Dorsolateral prefrontal cortex (tissue), 120 donors: ENCODE measurements at regions of chr2 and their contacts with region 1.

Region 1: DNA sequence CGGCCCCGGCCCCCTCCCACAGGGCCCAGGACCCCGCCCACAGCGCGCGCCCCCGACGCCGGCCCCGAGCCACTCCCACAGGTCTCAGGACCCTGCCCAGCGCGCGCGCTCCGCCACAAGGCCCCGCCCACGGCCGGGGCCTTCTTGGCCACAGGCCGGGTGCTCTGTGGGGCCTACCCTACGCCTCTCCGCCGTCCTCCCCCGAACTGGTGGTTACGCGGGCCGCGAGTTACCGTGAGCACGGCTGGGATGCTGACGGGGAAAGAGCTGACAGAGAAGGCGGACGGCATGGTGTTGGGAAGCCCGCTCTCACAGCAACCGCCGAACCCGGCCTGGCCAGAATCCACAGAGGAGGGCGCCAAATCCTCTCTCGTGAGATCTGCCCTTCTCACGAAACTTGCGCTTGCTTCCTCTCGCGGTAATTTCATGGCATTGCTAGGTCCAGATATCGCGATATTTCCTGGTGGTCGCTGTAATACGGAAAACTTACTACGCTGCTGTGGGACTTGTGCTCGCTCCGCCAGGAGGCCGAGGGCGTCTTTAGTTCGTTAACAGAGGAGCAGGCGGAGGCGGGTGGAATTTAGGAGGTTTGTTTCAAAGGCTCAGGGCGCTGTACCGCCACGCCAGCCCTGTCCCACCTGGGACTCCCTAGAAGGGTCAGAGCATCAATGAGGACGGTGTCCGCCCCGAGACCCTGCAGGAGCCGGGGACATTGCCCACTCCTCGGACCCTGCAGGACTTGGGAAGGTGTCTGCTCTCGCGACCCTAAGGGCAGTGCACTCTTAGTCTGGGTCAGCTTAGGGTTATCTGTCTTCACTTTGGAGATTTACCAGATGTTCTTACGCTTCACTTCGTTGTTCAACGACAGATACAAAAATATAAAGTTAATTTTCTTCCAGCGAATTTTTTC is at the start of gene TMEM18:
- DNase-seq: peak; percentile 73 to 96 (median 90)
- H3K4me3 ChIP-seq: peak within 1 kb of the TSS; percentile 69 to 99 (median 91)
- H3K27ac ChIP-seq: peak within 1 kb of the TSS; percentile 87 to 100 (median 98)
- H3K27me3 ChIP-seq: no peaks in the 10 kb centered on the region
- CTCF ChIP-seq: peak in 54 of 56 donors; percentile 13 to 69 (median 53)
- total RNA-seq, gene TMEM18: 7.8 to 32.4 (median 21.4) TPM

Region 2: DNA sequence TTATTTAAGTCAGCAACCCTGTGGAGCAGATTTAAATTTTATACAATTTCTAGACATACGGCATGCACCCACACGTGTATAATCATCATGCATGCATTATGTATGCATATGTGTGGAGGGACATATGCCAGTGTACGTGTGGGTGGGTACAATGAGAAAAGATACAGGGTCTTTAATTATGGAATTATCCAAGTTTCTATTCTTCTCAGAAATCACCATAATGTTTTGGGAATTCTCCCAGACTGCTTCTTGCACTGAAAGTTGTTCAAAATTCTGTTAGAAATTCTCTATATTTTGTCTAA is 63.8 kb after region 1 on chr2:
- intact Hi-C with region 1: loop called in 1 of 2 experiments (anchors 2 kb)
- DNase-seq: no peak
- H3K4me3 ChIP-seq: peak overlapping the region in 44 of 59 donors; percentile 40 to 73 (median 55)
- H3K27ac ChIP-seq: peak overlapping the region in 1 of 59 donors; percentile 55
- H3K27me3 ChIP-seq: peaks cover 0 to 55% (median 0%) of the 10 kb centered on the region in 45 donors
- CTCF ChIP-seq: no peak

Region 3: DNA sequence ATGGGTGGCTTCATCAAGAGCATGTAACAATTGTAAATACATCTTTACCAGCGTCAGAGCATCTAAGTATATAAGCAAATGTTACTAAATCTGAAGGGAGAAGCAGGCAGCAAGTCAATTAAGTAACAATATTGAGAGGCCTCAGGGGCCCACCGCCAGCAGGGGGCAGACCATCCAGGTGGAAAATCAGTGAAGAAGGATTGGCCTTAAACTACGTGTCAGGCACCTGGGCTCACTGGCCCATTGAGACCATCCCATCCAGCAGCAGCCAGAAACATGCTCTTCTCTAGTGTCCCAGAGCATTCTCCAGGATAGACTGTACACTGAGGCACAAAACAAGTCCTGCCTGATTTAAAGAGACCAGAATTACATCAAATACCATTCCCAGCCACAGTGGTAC is 177.1 kb after region 1 on chr2:
- intact Hi-C with region 1: no loop called
- DNase-seq: peak in 1 of 10 donors; percentile 30
- H3K4me3 ChIP-seq: no peak overlapping the region
- H3K27ac ChIP-seq: no peak overlapping the region
- H3K27me3 ChIP-seq: no peaks in the 10 kb centered on the region
- CTCF ChIP-seq: peak; percentile 17 to 66 (median 48)

Region 4: DNA sequence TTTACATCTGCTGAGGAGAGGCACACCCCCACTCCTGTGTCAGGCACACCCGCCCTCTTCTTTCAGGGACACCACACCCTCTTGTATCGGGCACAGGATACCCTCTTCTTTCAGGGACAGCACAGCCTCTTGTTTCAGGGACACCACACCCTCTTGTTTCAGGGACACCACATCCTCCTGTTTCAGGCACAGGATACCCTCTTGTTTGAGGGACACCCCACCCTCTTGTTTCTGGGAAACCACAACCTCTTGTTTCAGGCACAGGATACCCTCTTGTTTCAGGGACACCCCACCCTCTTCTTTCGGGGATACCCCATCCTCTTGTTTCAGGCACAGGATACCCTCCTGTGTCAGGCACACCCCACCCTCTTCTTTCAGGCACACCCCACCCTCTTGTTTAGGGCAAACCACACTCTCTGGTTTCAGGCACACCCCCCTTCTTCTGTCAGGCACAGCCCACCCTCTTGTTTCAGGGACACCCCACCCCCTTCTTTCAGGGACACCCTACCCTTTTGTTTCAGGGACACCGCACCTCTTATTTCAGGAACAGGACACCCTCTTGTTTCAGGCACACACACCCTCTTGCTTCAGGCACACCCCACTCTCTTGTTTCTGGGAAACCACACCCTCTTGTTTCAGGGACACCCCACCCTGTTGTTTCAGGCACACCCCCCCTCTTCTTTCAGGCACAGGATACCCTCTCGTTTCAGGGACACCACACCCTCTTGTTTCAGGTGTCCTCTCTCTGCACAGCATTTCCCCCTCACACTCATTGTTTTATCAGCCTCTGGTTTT is 832.2 kb after region 1 on chr2:
- intact Hi-C with region 1: no loop called
- DNase-seq: peak in 2 of 10 donors; percentile 1 to 4
- H3K4me3 ChIP-seq: no peak overlapping the region
- H3K27ac ChIP-seq: no peak overlapping the region
- H3K27me3 ChIP-seq: peaks cover 0 to 11% (median 0%) of the 10 kb centered on the region in 45 donors
- CTCF ChIP-seq: no peak